CD4-positive, alpha-beta T cell (primary cell): ENCODE measurements at regions of chr19 and their contacts with region 1.

Region 1: DNA sequence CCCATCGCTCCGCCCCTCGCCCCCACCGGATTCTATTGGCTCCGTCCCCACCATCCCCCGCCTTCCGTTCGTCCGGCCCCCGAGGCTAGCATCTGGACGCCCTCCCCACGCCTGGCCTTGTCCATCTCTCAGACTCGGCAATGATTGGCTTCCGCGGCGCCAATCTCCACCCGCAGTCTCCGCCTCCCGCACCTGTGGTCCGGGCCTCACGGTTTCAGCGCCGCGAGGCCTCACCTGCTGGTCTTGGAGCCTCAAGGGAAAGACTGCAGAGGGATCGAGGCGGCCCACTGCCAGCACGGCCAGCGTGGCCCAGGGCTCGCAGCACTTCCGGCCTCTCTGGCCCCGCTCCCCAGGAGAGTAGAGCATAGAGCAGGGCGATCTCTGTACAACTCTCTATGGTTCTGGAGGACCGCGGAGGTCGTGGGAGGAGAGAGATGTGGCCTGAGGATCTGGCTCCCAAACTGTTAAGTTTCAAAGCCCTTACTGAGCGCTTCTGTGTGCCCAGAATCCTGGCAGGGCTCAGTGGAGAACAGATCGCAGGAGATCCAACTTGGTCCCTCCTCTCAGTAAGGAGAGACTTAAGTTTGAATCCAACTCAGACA is at the start of gene ERCC1:
- DNase-seq: peak in 7 of 14 experiments; percentile 36 to 87 (median 48)
- ATAC-seq: peak; percentile 58
- H3K4me3 ChIP-seq: peak within 1 kb of the TSS; percentile 90
- H3K4me3 Mint-ChIP-seq: peak within 1 kb of the TSS; percentile 92
- H3K27ac ChIP-seq: peak within 1 kb of the TSS; percentile 54 to 75
- H3K27ac Mint-ChIP-seq: peak within 1 kb of the TSS; percentile 80
- H3K4me1 ChIP-seq: peaks cover 53% of the 10 kb centered on the region
- H3K4me1 Mint-ChIP-seq: peaks cover 48% of the 10 kb centered on the region
- H3K27me3 ChIP-seq: peaks cover 4 to 5% of the 10 kb centered on the region in 2 experiments
- H3K27me3 Mint-ChIP-seq: peaks cover 9% of the 10 kb centered on the region
- CTCF ChIP-seq: no peak
- total RNA-seq, gene ERCC1: 32.5 to 32.6 TPM

Region 2: GRCh38 chr19:45059278-45059965 is 364.3 kb before region 1 on chr19:
- CTCF ChIA-PET with region 1: no interaction called
- POLR2A ChIA-PET with region 1: no interaction called
- intact Hi-C with region 1: no loop called
- DNase-seq: peak; percentile 71 to 91 (median 84)
- ATAC-seq: peak; percentile 93
- H3K4me3 ChIP-seq: no peak overlapping the region
- H3K4me3 Mint-ChIP-seq: no peak overlapping the region
- H3K27ac ChIP-seq: no peak overlapping the region
- H3K27ac Mint-ChIP-seq: no peak overlapping the region
- H3K4me1 ChIP-seq: peaks cover 3% of the 10 kb centered on the region
- H3K4me1 Mint-ChIP-seq: peaks cover 4% of the 10 kb centered on the region
- H3K27me3 ChIP-seq: no peaks in the 10 kb centered on the region
- H3K27me3 Mint-ChIP-seq: no peaks in the 10 kb centered on the region
- CTCF ChIP-seq: peak; percentile 87

Region 3: DNA sequence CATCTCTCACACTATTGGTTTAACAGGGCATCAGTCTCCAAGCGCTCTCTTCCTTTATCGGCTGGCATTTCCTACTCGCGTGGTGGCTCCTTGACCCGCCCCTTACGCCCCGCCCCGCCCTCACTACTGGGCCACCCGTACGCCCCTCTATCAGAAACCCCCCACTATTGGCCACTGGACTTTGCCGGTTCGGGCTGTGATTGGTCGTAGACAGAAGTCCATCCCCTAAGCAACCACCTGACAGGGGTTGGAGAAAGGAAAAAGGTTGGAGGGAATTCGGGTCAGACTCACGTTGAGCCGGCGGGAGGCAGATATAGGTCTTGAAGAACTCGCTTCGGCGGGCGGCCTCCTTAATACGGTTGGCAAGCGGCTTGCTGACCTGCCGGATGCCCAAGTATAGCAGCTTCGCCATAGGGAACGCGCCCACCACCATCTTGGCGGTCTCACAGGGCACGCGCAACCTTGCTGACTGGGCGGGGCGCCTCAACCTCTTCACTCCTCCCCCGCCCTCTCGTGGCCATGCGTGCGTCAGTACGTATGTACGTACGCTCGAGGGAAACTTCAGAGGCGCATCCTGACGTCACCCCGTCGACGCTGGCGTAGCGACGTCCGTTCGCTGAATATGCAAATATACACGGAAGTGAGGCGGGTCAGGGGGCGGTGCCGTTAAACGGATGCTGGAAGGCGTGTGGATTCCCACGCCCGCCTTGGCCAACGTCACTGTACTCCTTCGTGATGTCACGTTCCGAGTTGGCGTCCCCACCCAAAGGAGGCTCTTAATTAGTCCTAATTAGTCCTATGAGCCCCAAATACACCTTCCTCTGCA is 160.9 kb after region 1 on chr19 and contains the start of gene OPA3:
- CTCF ChIA-PET with region 1: no interaction called
- POLR2A ChIA-PET with region 1: no interaction called
- intact Hi-C with region 1: loop called in 1 of 2 experiments (anchors 10 kb)
- DNase-seq: peak; percentile 97 to 100 (median 99)
- ATAC-seq: peak; percentile 85
- H3K4me3 ChIP-seq: peak within 1 kb of the TSS; percentile 95
- H3K4me3 Mint-ChIP-seq: peak within 1 kb of the TSS; percentile 88
- H3K27ac ChIP-seq: peak within 1 kb of the TSS; percentile 98 to 99
- H3K27ac Mint-ChIP-seq: peak within 1 kb of the TSS; percentile 98
- H3K4me1 ChIP-seq: peaks cover 21% of the 10 kb centered on the region
- H3K4me1 Mint-ChIP-seq: peaks cover 26% of the 10 kb centered on the region
- H3K27me3 ChIP-seq: peaks cover 0 to under 1% of the 10 kb centered on the region in 2 experiments
- H3K27me3 Mint-ChIP-seq: peaks cover 12% of the 10 kb centered on the region
- CTCF ChIP-seq: no peak
- total RNA-seq, gene OPA3: 3.1 to 3.2 TPM